K562 (cell line): ENCODE measurements at regions of chr10 and their contacts with region 1.

Region 1: DNA sequence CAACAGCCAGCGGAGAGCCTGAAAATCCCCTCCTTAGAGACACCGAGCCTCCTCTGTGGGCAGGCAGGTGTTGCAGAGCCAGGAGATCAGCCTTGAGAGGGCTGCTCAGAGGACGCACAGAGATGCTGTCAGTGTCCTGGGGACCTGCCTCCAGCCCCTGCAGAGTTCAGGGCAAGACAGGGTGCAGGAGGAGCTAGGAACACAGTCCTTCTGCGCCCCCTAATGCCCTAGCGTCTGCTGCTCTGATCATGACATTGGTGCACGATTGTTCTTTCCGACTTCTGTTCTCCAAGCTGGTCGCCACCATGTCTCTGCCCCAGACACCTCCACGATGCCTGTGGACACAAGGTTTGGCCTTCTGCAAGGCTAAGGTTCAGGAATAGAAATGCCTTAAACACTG is 613.7 kb upstream of the MKI67 start:
- DNase-seq: peak in 3 of 4 experiments; percentile 7 to 55 (median 51)
- ATAC-seq: peak; percentile 99
- H3K4me3 ChIP-seq: no peak overlapping the region
- H3K27ac ChIP-seq: no peak overlapping the region
- H3K4me1 ChIP-seq: no peaks in the 10 kb centered on the region; a peak in 2 of 5 replicates
- H3K27me3 ChIP-seq: peaks cover 3 to 16% of the 10 kb centered on the region in 2 experiments; a peak in 3 of 5 replicates
- CTCF ChIP-seq: peak; percentile 56 to 61 (median 59)
- EP300 ChIP-seq: no peak
- POLR2A ChIP-seq: no peak
- RAD21 ChIP-seq: peak in 1 of 2 experiments; percentile 64; a peak in 2 of 4 replicates

Region 2: GRCh38 chr10:128263891-128264688 is 475.8 kb before region 1 on chr10:
- CTCF ChIA-PET with region 1: interaction called, 3 read pairs
- POLR2A ChIA-PET with region 1: no interaction called
- in situ Hi-C with region 1: no loop called
- intact Hi-C with region 1: loop called (anchors 5 kb)
- DNase-seq: peak; percentile 17 to 50 (median 29)
- ATAC-seq: peak; percentile 88
- H3K4me3 ChIP-seq: no peak overlapping the region
- H3K27ac ChIP-seq: no peak overlapping the region
- H3K4me1 ChIP-seq: no peaks in the 10 kb centered on the region
- H3K27me3 ChIP-seq: peaks cover 0 to 14% of the 10 kb centered on the region in 2 experiments; a peak in 2 of 5 replicates
- CTCF ChIP-seq: peak; percentile 42 to 60 (median 54)
- EP300 ChIP-seq: no peak
- POLR2A ChIP-seq: no peak
- RAD21 ChIP-seq: peak; percentile 12 to 45; a peak in 3 of 4 replicates

Region 3: DNA sequence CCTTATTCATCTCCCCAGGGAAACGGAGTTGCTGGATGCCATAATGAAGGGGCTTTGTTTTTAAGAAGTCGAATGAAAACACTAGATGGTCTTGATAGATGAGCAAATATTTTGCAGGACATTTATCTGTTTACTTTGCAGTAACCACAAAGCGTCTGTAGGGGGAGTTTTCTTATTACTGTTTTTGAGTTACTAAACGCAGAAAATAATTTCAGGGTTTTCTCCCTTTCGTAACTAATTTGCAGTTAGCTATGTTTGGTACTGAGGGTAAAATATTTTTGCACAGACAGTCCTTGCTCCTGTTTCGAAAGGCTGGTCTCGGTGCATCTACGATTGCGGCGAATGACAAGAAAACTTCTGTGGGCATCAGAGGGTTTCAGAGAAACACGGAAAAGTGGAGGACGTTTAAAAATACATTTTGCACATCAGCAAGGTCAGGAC is 108.1 kb before region 1 on chr10:
- CTCF ChIA-PET with region 1: no interaction called
- POLR2A ChIA-PET with region 1: no interaction called
- in situ Hi-C with region 1: no loop called
- intact Hi-C with region 1: loop called (anchors 5 kb)
- DNase-seq: peak in 2 of 4 experiments; percentile 14 to 30
- ATAC-seq: no peak
- H3K4me3 ChIP-seq: no peak overlapping the region
- H3K27ac ChIP-seq: no peak overlapping the region
- H3K4me1 ChIP-seq: peaks cover 10 to 12% of the 10 kb centered on the region in 2 experiments; a peak in 4 of 5 replicates
- H3K27me3 ChIP-seq: no peaks in the 10 kb centered on the region
- CTCF ChIP-seq: peak; percentile 22 to 46 (median 43); a peak in 4 of 6 replicates
- EP300 ChIP-seq: no peak
- POLR2A ChIP-seq: no peak
- RAD21 ChIP-seq: no peak

Region 4: DNA sequence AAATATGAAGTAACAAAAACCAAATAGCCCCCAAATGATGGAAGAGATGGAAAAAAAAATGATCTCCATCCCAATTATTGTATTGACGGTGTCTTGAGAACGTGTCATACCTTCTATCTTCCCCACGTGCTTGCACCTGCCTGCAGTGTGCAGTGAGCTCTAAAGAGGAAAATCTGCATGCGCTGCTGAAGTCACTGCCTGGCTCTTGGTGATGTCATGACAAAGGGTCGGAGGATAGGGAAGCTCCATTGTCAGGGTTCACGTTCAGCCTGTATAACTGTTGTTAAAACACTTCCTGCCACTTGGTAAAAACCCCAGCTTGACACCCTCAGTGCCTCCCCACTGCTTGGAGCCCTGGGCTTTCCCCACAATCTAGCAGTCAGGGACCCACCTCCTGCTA is 64.5 kb before region 1 on chr10:
- CTCF ChIA-PET with region 1: no interaction called
- POLR2A ChIA-PET with region 1: no interaction called
- in situ Hi-C with region 1: no loop called
- intact Hi-C with region 1: no loop called
- DNase-seq: no peak
- ATAC-seq: peak; percentile 65
- H3K4me3 ChIP-seq: no peak overlapping the region
- H3K27ac ChIP-seq: no peak overlapping the region
- H3K4me1 ChIP-seq: no peaks in the 10 kb centered on the region; a peak in 2 of 5 replicates
- H3K27me3 ChIP-seq: peaks cover 0 to 10% of the 10 kb centered on the region in 2 experiments; a peak in 1 of 5 replicates
- CTCF ChIP-seq: no peak
- EP300 ChIP-seq: no peak
- POLR2A ChIP-seq: no peak
- RAD21 ChIP-seq: no peak